Activated CD8-positive, alpha-beta T cell treated with anti-CD3 and anti-CD28 coated beads, Interleukin-2, amount 10 ng/mL, durations not matched to agents 7 days and 5 days (primary cell): ENCODE measurements at regions of chr1 and their contacts with region 1.

Region 1: GRCh38 chr1:51535006-51535592 is 16.0 kb upstream of the EPS15 start:
- DNase-seq: peak; percentile 50
- ATAC-seq: peak; percentile 19
- H3K4me3 Mint-ChIP-seq: no peak overlapping the region
- H3K27ac Mint-ChIP-seq: no peak overlapping the region
- H3K4me1 Mint-ChIP-seq: peaks cover 9% of the 10 kb centered on the region
- H3K27me3 Mint-ChIP-seq: peaks cover 2% of the 10 kb centered on the region

Region 2: DNA sequence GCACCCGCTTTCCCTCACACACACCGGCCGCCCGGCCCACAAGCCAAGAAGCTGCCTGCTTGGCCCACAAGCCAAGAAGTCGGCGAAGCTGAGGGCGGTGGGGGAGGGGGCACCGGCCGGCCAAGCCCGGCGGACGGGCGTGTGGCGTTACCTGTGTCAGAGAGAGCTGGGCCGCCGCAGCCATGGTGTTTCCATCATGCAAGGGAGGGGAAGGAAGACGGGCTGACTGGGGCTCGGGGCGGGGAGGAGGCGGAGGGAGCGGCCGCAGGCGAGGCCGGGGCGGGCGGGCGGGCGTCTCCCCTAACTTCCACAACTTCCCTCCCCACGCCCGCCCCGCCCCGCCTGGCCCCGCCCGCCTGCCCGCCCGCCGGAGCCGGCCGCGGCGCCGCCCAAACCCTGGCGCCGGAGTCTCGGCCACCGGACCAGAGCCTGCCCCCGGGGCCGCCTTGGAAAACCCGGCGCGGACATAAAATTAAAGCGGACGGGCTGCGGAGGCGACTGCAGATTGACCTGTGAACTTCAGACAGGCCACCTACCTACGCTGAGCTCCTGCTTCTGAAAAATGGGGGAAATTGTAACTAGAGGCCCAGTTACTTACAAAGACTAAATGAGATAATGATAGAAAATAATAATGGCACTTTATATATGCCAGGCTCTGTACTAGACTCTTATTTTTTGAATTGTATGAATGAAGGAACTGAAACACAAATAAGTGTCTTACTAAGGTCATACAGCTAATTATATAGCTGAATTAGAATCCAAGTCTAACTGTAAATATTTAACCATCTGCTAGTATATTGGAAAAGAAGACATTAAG is 15.8 kb before region 1 on chr1 and contains the start of gene EPS15:
- CTCF ChIA-PET with region 1: interaction called, 20 read pairs
- POLR2A ChIA-PET with region 1: interaction called, 4 read pairs
- DNase-seq: peak; percentile 91
- ATAC-seq: peak; percentile 88
- H3K4me3 Mint-ChIP-seq: peak within 1 kb of the TSS; percentile 80
- H3K27ac Mint-ChIP-seq: peak within 1 kb of the TSS; percentile 80
- H3K4me1 Mint-ChIP-seq: peaks cover 54% of the 10 kb centered on the region
- H3K27me3 Mint-ChIP-seq: no peaks in the 10 kb centered on the region
- total RNA-seq, gene EPS15: 57.2 to 58.4 TPM